ENCODE measurements at regions of chr6 and their contacts with region 1.

Region 1: GRCh38 chr6:121260651-121261102 is 73.6 kb downstream of the TBC1D32 start:
- DNase-seq: no peak
- H3K4me3 ChIP-seq: no peak overlapping the region
- H3K27ac ChIP-seq: no peak overlapping the region
- H3K27me3 ChIP-seq: no peaks in the 10 kb centered on the region
- CTCF ChIP-seq: no peak

Region 2: DNA sequence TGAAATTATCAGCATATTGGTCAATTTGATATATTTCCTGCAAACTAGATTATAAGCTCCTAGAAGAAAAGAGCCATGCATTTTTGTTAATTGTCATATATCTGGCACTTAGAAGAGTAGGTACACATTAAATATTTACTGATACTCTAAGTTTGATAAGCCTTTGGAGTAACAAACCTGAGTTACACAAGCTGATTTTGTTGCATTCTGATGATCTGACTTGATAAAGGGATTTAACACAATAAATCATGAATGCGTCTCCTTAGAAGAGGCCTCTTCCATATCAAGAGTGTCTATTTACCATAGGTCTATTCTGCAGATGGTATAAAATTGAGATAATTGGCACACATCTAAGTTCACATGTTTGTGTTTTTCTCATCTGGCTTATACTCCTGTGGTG is 1259.5 kb after region 1 on chr6:
- intact Hi-C with region 1: loop called in 1 of 2 experiments (anchors 10 kb)
- DNase-seq: no peak
- H3K4me3 ChIP-seq: no peak overlapping the region
- H3K27ac ChIP-seq: no peak overlapping the region
- H3K27me3 ChIP-seq: no peaks in the 10 kb centered on the region
- CTCF ChIP-seq: no peak

Measured in dorsolateral prefrontal cortex (tissue), 120 donors.